ENCODE measurements at regions of chr18 and their contacts with region 1.

Region 1: DNA sequence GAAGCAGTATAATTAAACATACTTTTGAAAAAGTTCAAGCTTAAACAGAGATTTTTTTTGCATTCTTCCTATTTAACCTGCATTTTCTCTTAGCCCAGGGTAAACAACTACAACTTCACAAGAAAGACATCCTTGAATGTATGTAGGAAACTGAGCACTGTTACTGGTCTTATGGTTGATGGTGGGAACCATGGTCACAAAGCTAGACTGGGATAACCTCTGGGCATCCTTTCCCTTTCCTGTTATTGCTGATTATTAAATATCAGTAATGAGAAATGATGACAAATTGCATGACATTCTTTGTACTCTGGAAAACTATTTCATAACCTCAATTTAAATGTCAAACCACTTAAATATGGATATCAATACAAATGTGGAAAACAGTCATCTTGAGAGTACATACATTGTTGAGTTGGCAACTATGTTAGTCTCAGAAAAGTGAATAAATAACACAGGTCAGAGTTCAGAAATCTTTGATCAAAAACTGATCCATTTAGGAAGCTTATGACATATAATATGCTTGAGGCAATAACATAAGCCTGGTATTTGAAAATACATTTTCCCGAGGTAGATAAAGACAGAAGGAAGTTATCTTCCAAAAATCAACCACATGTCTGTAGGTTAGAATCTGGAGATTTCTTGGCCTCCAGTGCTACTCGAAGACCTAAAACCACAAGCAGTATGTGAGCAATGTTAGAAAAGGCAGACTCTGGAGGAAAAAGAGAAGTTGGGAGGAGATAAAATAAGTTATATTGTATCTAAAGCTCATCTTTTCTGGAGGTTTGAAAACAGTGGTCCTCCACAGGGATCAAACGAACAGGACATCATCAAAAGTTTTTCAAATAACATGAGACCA is 65.2 kb upstream of the ST8SIA5 start:
- DNase-seq: no peak
- H3K4me3 Mint-ChIP-seq: no peak overlapping the region
- H3K27ac Mint-ChIP-seq: peak overlapping the region; percentile 67
- H3K4me1 Mint-ChIP-seq: peaks cover 10% of the 10 kb centered on the region
- H3K27me3 Mint-ChIP-seq: no peaks in the 10 kb centered on the region

Region 2: DNA sequence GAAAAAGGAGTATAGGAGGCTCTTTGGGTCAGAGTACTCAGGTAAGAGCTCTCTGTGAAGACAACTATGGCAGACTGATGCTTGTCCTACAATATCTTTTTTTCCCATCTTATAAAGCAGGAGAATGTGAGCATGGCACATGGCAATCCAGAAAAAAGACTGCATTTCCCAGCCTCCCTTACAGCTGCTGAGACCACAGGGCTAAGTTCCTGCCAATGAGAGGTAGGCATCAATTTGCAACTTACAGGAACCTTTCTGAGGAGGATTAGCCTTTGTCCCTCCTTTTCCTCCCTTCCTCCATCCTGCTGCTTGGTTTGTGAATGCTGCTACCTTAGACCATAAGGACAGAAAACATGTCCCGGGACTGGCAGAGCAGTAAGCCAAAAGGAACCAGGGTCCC is 27.5 kb before region 1 on chr18:
- intact Hi-C with region 1: no loop called
- DNase-seq: no peak
- H3K4me3 Mint-ChIP-seq: no peak overlapping the region
- H3K27ac Mint-ChIP-seq: no peak overlapping the region
- H3K4me1 Mint-ChIP-seq: no peaks in the 10 kb centered on the region
- H3K27me3 Mint-ChIP-seq: no peaks in the 10 kb centered on the region

Region 3: GRCh38 chr18:46891742-46892214 is 69.7 kb after region 1 on chr18:
- intact Hi-C with region 1: loop called (anchors 1 kb)
- DNase-seq: no peak
- H3K4me3 Mint-ChIP-seq: no peak overlapping the region
- H3K27ac Mint-ChIP-seq: peak overlapping the region; percentile 21
- H3K4me1 Mint-ChIP-seq: peaks cover 35% of the 10 kb centered on the region
- H3K27me3 Mint-ChIP-seq: no peaks in the 10 kb centered on the region

Measured in activated T-helper 1 cell treated with anti-CD3 and anti-CD28 coated beads, Interleukin-12 subunit alpha, Interleukin-12 subunit beta, Interleukin-2, Interleukin-4 antibody, amounts not matched to agents 30 ng/mL and 10 ng/mL and 1 ng/mL, durations not matched to agents 14 hours and 24 hours and 36 hours (primary cell).